CD8-positive, alpha-beta T cell (primary cell): ENCODE measurements at regions of chr6 and their contacts with region 1.

Region 1: DNA sequence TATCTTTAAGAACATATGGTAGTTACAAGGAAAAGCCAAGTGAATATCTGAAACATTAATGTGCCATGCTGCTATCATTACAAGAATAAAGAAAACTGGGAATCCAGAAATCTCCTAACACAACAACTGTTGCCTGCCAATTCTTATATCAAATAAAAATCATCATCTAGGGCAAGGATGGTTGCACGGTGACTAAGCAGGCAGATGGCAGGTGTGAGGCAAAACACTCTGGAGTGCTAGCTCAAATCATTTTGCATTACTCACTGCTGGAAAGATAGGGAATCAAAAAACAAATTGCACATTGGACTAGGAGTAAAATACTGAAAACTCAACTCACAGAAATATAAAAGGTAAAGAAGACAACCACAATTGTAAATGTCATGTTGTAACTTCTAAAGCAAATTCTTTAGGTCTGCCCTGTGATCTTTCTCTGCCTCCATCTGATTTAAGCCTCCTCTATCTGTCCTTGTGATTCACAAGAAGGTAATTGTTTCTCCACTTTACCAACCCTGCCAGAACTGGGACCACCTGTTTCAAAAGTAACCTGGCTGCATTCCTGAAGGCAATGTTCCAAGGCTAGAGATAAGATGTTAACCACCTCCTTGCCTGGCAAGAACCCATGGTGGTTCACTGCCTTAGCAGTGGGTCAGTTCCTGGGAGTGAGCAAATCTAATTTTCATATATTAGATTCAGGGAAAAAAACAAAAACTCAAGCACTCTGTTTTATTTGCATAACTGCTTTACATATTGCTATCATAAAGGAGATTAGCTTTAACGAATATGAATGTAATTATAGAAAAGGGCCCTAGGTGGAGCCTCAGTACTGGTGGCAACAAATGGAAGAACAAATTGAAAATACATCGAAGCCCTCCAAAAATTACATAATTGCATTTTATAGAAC is 33.1 kb upstream of the LCA5 start:
- DNase-seq: peak in 2 of 9 experiments; percentile 42 to 56
- ATAC-seq: peak; percentile 31
- H3K4me3 ChIP-seq: no peak overlapping the region
- H3K4me3 Mint-ChIP-seq: peak overlapping the region; percentile 40
- H3K27ac ChIP-seq: no peak overlapping the region
- H3K27ac Mint-ChIP-seq: no peak overlapping the region
- H3K4me1 ChIP-seq: no peaks in the 10 kb centered on the region
- H3K4me1 Mint-ChIP-seq: peaks cover 3% of the 10 kb centered on the region
- H3K27me3 ChIP-seq: no peaks in the 10 kb centered on the region
- H3K27me3 Mint-ChIP-seq: no peaks in the 10 kb centered on the region
- CTCF ChIP-seq: peak; percentile 47

Region 2: GRCh38 chr6:79551401-79551800 is 19.0 kb before region 1 on chr6:
- CTCF ChIA-PET with region 1: no interaction called
- POLR2A ChIA-PET with region 1: no interaction called
- intact Hi-C with region 1: no loop called
- DNase-seq: no peak
- ATAC-seq: no peak
- H3K4me3 ChIP-seq: no peak overlapping the region
- H3K4me3 Mint-ChIP-seq: no peak overlapping the region
- H3K27ac ChIP-seq: no peak overlapping the region
- H3K27ac Mint-ChIP-seq: no peak overlapping the region
- H3K4me1 ChIP-seq: no peaks in the 10 kb centered on the region
- H3K4me1 Mint-ChIP-seq: no peaks in the 10 kb centered on the region
- H3K27me3 ChIP-seq: no peaks in the 10 kb centered on the region
- H3K27me3 Mint-ChIP-seq: peaks cover 2% of the 10 kb centered on the region
- CTCF ChIP-seq: no peak

Region 3: DNA sequence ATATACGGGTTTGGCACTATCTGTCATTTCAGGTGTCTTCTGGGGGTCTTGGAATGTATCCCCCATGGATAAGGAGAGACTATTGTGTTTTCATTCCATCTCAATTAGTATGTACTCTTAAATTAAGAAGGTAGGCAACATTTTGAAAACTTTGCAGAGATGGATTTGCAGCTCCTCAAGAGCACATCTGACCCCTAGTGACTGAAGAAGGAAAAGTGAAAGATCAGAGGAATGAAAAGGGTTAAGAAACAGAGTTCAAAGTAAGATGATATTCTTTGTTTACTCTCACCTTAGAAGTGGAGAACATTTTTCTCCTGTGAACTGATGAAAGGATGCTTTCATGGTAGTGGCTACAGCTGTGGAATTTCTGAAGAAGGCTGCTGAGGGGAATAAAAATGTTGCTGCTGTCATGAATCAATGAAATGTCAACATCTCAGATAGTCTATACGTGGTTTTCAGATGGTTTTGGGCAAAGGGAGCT is 102.3 kb after region 1 on chr6:
- CTCF ChIA-PET with region 1: interaction called, 9 read pairs
- POLR2A ChIA-PET with region 1: no interaction called
- intact Hi-C with region 1: loop called in 1 of 2 experiments (anchors 1 kb)
- DNase-seq: peak in 2 of 9 experiments; percentile 25 to 52
- ATAC-seq: no peak
- H3K4me3 ChIP-seq: no peak overlapping the region
- H3K4me3 Mint-ChIP-seq: no peak overlapping the region
- H3K27ac ChIP-seq: no peak overlapping the region
- H3K27ac Mint-ChIP-seq: peak overlapping the region; percentile 15
- H3K4me1 ChIP-seq: peaks cover 48% of the 10 kb centered on the region
- H3K4me1 Mint-ChIP-seq: peaks cover 29% of the 10 kb centered on the region
- H3K27me3 ChIP-seq: no peaks in the 10 kb centered on the region
- H3K27me3 Mint-ChIP-seq: no peaks in the 10 kb centered on the region
- CTCF ChIP-seq: no peak

Region 4: GRCh38 chr6:79713701-79714322 is 143.4 kb after region 1 on chr6:
- CTCF ChIA-PET with region 1: interaction called, 6 read pairs
- POLR2A ChIA-PET with region 1: no interaction called
- intact Hi-C with region 1: loop called (anchors 1 to 2 kb)
- DNase-seq: peak; percentile 7 to 73 (median 53)
- ATAC-seq: peak; percentile 40
- H3K4me3 ChIP-seq: no peak overlapping the region
- H3K4me3 Mint-ChIP-seq: no peak overlapping the region
- H3K27ac ChIP-seq: no peak overlapping the region
- H3K27ac Mint-ChIP-seq: no peak overlapping the region
- H3K4me1 ChIP-seq: peaks cover 11% of the 10 kb centered on the region
- H3K4me1 Mint-ChIP-seq: no peaks in the 10 kb centered on the region
- H3K27me3 ChIP-seq: no peaks in the 10 kb centered on the region
- H3K27me3 Mint-ChIP-seq: peaks cover 6% of the 10 kb centered on the region
- CTCF ChIP-seq: peak; percentile 70

Region 5: GRCh38 chr6:79813854-79814709 is 243.7 kb after region 1 on chr6:
- CTCF ChIA-PET with region 1: interaction called, 5 read pairs
- POLR2A ChIA-PET with region 1: no interaction called
- intact Hi-C with region 1: loop called in 1 of 2 experiments (anchors 2 kb)
- DNase-seq: peak; percentile 6 to 70 (median 59)
- ATAC-seq: no peak
- H3K4me3 ChIP-seq: no peak overlapping the region
- H3K4me3 Mint-ChIP-seq: no peak overlapping the region
- H3K27ac ChIP-seq: no peak overlapping the region
- H3K27ac Mint-ChIP-seq: no peak overlapping the region
- H3K4me1 ChIP-seq: no peaks in the 10 kb centered on the region
- H3K4me1 Mint-ChIP-seq: no peaks in the 10 kb centered on the region
- H3K27me3 ChIP-seq: no peaks in the 10 kb centered on the region
- H3K27me3 Mint-ChIP-seq: peaks cover 3% of the 10 kb centered on the region
- CTCF ChIP-seq: peak; percentile 88